ENCODE measurements at regions of chr1 and their contacts with region 1.

Region 1: GRCh38 chr1:11907275-11908094 is 18.7 kb downstream of the KIAA2013 start:
- DNase-seq: peak; percentile 92 to 96
- H3K4me3 ChIP-seq: peak overlapping the region; percentile 64 to 65
- H3K27ac ChIP-seq: peak overlapping the region; percentile 92 to 93
- H3K4me1 ChIP-seq: peaks cover 0 to 3% (median 0%) of the 10 kb centered on the region in 4 donors
- H3K27me3 ChIP-seq: no peaks in the 10 kb centered on the region
- CTCF ChIP-seq: peak; percentile 79 to 83

Region 2: GRCh38 chr1:11784993-11785769 is 122.3 kb before region 1 on chr1:
- intact Hi-C with region 1: loop called (anchors 5 kb)
- DNase-seq: peak; percentile 56 to 82
- H3K4me3 ChIP-seq: peak overlapping the region; percentile 20 to 47
- H3K27ac ChIP-seq: peak overlapping the region; percentile 43 to 47
- H3K4me1 ChIP-seq: peaks cover 9 to 53% (median 48%) of the 10 kb centered on the region in 4 donors
- H3K27me3 ChIP-seq: no peaks in the 10 kb centered on the region
- CTCF ChIP-seq: peak; percentile 78

Region 3: GRCh38 chr1:12220890-12221289 is 313.4 kb after region 1 on chr1:
- intact Hi-C with region 1: no loop called
- DNase-seq: no peak
- H3K4me3 ChIP-seq: no peak overlapping the region
- H3K27ac ChIP-seq: no peak overlapping the region
- H3K4me1 ChIP-seq: no peaks in the 10 kb centered on the region
- H3K27me3 ChIP-seq: peaks cover 0 to 3% of the 10 kb centered on the region in 2 donors
- CTCF ChIP-seq: no peak

Measured in tibial artery (tissue), 4 donors.